ENCODE measurements at regions of chr5 and their contacts with region 1.

Region 1: DNA sequence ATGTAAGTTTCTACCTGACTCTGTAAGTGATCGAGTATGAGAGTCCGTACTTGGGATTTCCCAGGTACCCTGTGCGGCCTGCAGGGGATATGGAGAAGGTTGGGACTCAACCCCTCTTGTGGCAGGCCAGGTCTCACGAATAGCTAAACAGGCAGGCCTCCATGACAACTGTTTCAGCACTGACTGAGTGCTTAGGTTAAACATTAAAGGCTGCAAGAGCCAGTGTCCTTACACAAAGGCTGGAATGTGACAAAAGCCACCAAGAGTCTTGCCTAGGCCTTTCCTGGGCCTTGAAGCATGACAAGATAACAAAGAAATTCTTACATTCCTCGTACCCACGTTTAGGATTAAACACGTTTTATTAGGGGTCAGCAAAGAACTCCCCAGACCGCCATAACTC is 58.6 kb downstream of the THBS4 start:
- DNase-seq: peak; percentile 92 to 96
- H3K4me3 ChIP-seq: no peak overlapping the region
- H3K4me3 Mint-ChIP-seq: peak overlapping the region; percentile 44
- H3K27ac Mint-ChIP-seq: peak overlapping the region; percentile 94
- H3K4me1 ChIP-seq: peaks cover 68% of the 10 kb centered on the region
- H3K4me1 Mint-ChIP-seq: peaks cover 43% of the 10 kb centered on the region
- H3K27me3 ChIP-seq: no peaks in the 10 kb centered on the region
- H3K27me3 Mint-ChIP-seq: no peaks in the 10 kb centered on the region
- CTCF ChIP-seq: peak; percentile 51 to 54

Region 2: GRCh38 chr5:80083101-80083890 is 10.5 kb before region 1 on chr5:
- CTCF ChIA-PET with region 1: interaction called, 22 read pairs
- POLR2A ChIA-PET with region 1: no interaction called
- intact Hi-C with region 1: no loop called
- DNase-seq: peak in 1 of 2 experiments; percentile 28
- H3K4me3 ChIP-seq: no peak overlapping the region
- H3K4me3 Mint-ChIP-seq: no peak overlapping the region
- H3K27ac Mint-ChIP-seq: no peak overlapping the region
- H3K4me1 ChIP-seq: no peaks in the 10 kb centered on the region
- H3K4me1 Mint-ChIP-seq: no peaks in the 10 kb centered on the region
- H3K27me3 ChIP-seq: no peaks in the 10 kb centered on the region
- H3K27me3 Mint-ChIP-seq: no peaks in the 10 kb centered on the region
- CTCF ChIP-seq: peak; percentile 62 to 68

Region 3: GRCh38 chr5:80125962-80126480 is 32.2 kb after region 1 on chr5:
- CTCF ChIA-PET with region 1: interaction called, 5 read pairs
- POLR2A ChIA-PET with region 1: interaction called, 3 read pairs
- intact Hi-C with region 1: loop called (anchors 1 kb)
- DNase-seq: no peak
- H3K4me3 ChIP-seq: no peak overlapping the region
- H3K4me3 Mint-ChIP-seq: no peak overlapping the region
- H3K27ac Mint-ChIP-seq: peak overlapping the region; percentile 5
- H3K4me1 ChIP-seq: peaks cover 36% of the 10 kb centered on the region
- H3K4me1 Mint-ChIP-seq: peaks cover 31% of the 10 kb centered on the region
- H3K27me3 ChIP-seq: no peaks in the 10 kb centered on the region
- H3K27me3 Mint-ChIP-seq: no peaks in the 10 kb centered on the region
- CTCF ChIP-seq: peak in 1 of 2 experiments; percentile 17

Region 4: DNA sequence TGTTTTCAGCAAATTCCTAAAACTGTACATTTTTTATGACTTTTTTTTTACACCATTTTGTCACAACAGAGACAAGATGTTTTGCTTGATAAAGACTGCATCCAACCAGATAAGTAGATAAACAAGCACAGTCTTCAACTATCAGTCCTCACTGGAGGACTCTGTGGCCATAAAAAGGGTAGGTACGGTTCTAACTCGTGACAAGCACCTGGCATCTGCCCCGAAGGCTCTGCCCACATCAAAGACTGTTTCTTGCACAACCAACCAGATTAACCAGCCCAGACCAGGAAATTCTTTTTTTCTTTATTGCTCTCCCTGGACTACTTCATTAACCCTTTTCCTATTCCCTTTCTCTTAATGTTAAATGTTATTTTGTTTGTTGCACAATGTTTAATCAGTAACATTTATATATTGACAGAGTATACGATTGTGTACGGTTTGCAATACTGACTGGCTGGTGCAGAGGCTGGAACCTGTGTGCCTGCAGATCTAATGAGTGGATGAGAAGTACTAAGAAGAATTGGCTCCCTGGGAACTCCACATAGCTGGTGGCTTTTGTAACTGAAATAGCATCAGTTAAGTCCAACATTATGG is 87.9 kb after region 1 on chr5:
- CTCF ChIA-PET with region 1: interaction called, 12 read pairs
- POLR2A ChIA-PET with region 1: no interaction called
- intact Hi-C with region 1: loop called (anchors 1 kb)
- DNase-seq: peak; percentile 92 to 93
- H3K4me3 ChIP-seq: no peak overlapping the region
- H3K4me3 Mint-ChIP-seq: peak overlapping the region; percentile 66
- H3K27ac Mint-ChIP-seq: peak overlapping the region; percentile 92
- H3K4me1 ChIP-seq: peaks cover 76% of the 10 kb centered on the region
- H3K4me1 Mint-ChIP-seq: peaks cover 71% of the 10 kb centered on the region
- H3K27me3 ChIP-seq: no peaks in the 10 kb centered on the region
- H3K27me3 Mint-ChIP-seq: no peaks in the 10 kb centered on the region
- CTCF ChIP-seq: no peak

Region 5: DNA sequence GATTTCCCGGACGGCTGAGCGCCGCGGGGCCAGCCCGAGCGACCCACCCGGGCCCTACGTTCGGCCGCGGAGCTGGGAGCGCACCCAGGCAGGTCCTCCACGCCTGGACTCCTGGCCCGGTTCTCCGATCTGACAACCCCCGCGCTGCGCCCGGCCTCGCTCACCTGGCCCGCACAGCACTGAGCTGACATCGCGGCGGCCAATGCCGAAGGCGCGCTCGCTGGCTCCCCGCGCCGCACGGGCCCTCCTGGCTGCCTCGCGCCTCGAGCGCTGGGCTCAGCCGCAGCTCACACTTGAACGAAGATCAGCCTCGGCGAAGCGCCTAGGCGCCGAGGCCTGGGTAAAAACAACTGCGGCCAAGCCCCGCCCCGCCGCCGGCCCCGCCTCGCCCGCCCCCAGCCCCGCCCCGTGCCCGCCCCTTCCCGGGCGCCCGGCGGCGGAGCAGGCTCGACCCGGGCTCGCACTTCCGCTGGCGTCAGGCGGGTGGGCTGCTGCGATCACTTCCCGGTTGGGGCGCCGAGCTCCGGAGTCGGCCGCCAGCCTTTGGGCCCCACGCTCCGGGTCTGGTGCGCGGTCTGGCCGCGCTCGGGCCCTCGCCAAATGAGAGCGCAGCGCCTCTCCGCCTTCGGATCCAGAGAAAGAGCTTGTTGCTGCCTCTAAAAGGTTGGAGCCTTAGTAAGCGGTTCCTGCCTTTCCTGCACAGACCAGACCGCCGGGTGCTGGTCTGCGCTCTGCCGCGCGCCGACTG is 162.1 kb after region 1 on chr5 and contains the start of gene SERINC5:
- CTCF ChIA-PET with region 1: interaction called, 10 read pairs
- POLR2A ChIA-PET with region 1: interaction called, 7 read pairs
- intact Hi-C with region 1: loop called (anchors 5 kb)
- DNase-seq: peak; percentile 85
- H3K4me3 ChIP-seq: peak within 1 kb of the TSS; percentile 84
- H3K4me3 Mint-ChIP-seq: peak within 1 kb of the TSS; percentile 91
- H3K27ac Mint-ChIP-seq: peak within 1 kb of the TSS; percentile 86
- H3K4me1 ChIP-seq: peaks cover 44% of the 10 kb centered on the region
- H3K4me1 Mint-ChIP-seq: peaks cover 33% of the 10 kb centered on the region
- H3K27me3 ChIP-seq: no peaks in the 10 kb centered on the region
- H3K27me3 Mint-ChIP-seq: no peaks in the 10 kb centered on the region
- CTCF ChIP-seq: no peak
- total RNA-seq, gene SERINC5: 225 and 226 TPM in 2 replicates

Region 6: GRCh38 chr5:80308526-80308925 is 214.7 kb after region 1 on chr5:
- CTCF ChIA-PET with region 1: interaction called, 11 read pairs
- POLR2A ChIA-PET with region 1: no interaction called
- intact Hi-C with region 1: loop called (anchors 1 kb)
- DNase-seq: no peak
- H3K4me3 ChIP-seq: no peak overlapping the region
- H3K4me3 Mint-ChIP-seq: no peak overlapping the region
- H3K27ac Mint-ChIP-seq: no peak overlapping the region
- H3K4me1 ChIP-seq: peaks cover 5% of the 10 kb centered on the region
- H3K4me1 Mint-ChIP-seq: no peaks in the 10 kb centered on the region
- H3K27me3 ChIP-seq: no peaks in the 10 kb centered on the region
- H3K27me3 Mint-ChIP-seq: no peaks in the 10 kb centered on the region
- CTCF ChIP-seq: no peak

Region 7: DNA sequence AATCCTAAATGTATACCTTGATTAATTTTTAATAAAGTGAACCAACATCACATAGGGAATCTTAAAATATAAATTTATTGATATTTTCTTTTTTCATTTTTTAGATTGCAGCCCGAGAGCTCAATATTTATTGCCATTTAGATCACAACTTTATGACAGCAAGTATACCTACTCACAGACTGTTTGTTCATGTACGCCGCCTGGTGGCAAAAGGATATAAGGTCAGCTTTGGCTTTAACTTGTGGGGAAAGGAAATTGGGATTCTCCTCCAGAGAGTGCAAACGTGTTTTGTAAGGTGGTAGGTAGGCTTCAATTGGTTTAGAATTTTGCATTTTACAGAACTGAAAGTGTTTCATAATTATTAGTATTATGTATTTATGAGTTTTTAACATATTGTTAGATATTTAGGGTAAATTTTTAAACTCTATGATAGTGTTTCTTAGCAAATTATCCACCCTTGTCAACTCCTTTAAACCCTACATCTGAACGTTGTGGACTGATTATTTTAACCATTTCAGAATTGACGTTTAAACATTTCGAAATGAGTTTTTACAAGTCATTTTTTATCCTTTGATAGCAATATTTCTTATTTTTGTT is 578.4 kb after region 1 on chr5:
- CTCF ChIA-PET with region 1: interaction called, 3 read pairs
- POLR2A ChIA-PET with region 1: no interaction called
- intact Hi-C with region 1: loop called (anchors 5 kb)
- DNase-seq: peak; percentile 76 to 77
- H3K4me3 ChIP-seq: no peak overlapping the region
- H3K4me3 Mint-ChIP-seq: no peak overlapping the region
- H3K27ac Mint-ChIP-seq: no peak overlapping the region
- H3K4me1 ChIP-seq: no peaks in the 10 kb centered on the region
- H3K4me1 Mint-ChIP-seq: no peaks in the 10 kb centered on the region
- H3K27me3 ChIP-seq: no peaks in the 10 kb centered on the region
- H3K27me3 Mint-ChIP-seq: no peaks in the 10 kb centered on the region
- CTCF ChIP-seq: peak; percentile 77 to 87